Tibial artery (tissue), 4 donors: ENCODE measurements at regions of chr2 and their contacts with region 1.

Region 1: GRCh38 chr2:227766373-227766883 is 20.7 kb downstream of the SCYGR8 start:
- DNase-seq: peak; percentile 79 to 85
- H3K4me3 ChIP-seq: no peak overlapping the region
- H3K27ac ChIP-seq: no peak overlapping the region
- H3K4me1 ChIP-seq: peaks cover 0 to 12% (median 3%) of the 10 kb centered on the region in 4 donors
- H3K27me3 ChIP-seq: no peaks in the 10 kb centered on the region
- CTCF ChIP-seq: peak; percentile 82 to 94

Region 2: GRCh38 chr2:227406177-227407031 is 360.0 kb before region 1 on chr2:
- intact Hi-C with region 1: loop called (anchors 10 kb)
- DNase-seq: peak; percentile 46 to 72
- H3K4me3 ChIP-seq: peak overlapping the region in 1 of 2 donors; percentile 14
- H3K27ac ChIP-seq: peak overlapping the region; percentile 42 to 54
- H3K4me1 ChIP-seq: peaks cover 0 to 20% (median 14%) of the 10 kb centered on the region in 4 donors
- H3K27me3 ChIP-seq: no peaks in the 10 kb centered on the region
- CTCF ChIP-seq: peak; percentile 51 to 52

Region 3: GRCh38 chr2:227471924-227472264 is 294.5 kb before region 1 on chr2 and contains the start of gene AGFG1:
- intact Hi-C with region 1: loop called (anchors 10 kb)
- DNase-seq: peak; percentile 77 to 89
- H3K4me3 ChIP-seq: peak within 1 kb of the TSS; percentile 90 to 100
- H3K27ac ChIP-seq: peak within 1 kb of the TSS; percentile 89 to 94
- H3K4me1 ChIP-seq: peaks cover 0 to 41% (median 22%) of the 10 kb centered on the region in 4 donors
- H3K27me3 ChIP-seq: no peaks in the 10 kb centered on the region
- CTCF ChIP-seq: peak; percentile 94 to 99

Region 4: GRCh38 chr2:227661019-227661649 is 105.3 kb before region 1 on chr2:
- intact Hi-C with region 1: loop called (anchors 5 kb)
- DNase-seq: no peak
- H3K4me3 ChIP-seq: no peak overlapping the region
- H3K27ac ChIP-seq: no peak overlapping the region
- H3K4me1 ChIP-seq: peaks cover 0 to 8% (median 0%) of the 10 kb centered on the region in 4 donors
- H3K27me3 ChIP-seq: no peaks in the 10 kb centered on the region
- CTCF ChIP-seq: no peak

Region 5: DNA sequence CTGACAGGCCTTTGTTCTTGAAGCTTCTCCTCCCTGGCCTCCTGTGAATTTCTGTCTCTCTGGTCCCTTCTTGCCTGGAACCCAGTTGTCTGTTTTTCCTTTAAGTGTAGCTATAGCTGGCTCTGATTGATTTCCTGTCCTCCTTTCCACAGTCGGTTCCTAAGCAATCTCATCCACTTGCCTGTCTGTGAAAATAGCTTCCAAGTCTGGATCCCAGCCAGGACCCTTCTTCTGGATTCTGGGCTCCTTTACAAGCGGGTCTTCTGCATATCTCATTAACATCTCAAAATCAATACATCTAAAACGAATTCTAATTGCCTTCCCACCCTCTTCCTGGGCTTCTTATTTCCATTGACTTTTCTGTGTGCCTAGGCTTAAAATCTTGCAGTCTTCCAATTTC is 229.9 kb after region 1 on chr2:
- intact Hi-C with region 1: no loop called
- DNase-seq: no peak
- H3K4me3 ChIP-seq: no peak overlapping the region
- H3K27ac ChIP-seq: no peak overlapping the region
- H3K4me1 ChIP-seq: no peaks in the 10 kb centered on the region
- H3K27me3 ChIP-seq: no peaks in the 10 kb centered on the region
- CTCF ChIP-seq: no peak